ENCODE measurements at regions of chr19 and their contacts with region 1.

Region 1: GRCh38 chr19:32041681-32042292 is 303.6 kb upstream of the ZNF507 start:
- DNase-seq: no peak
- H3K4me3 ChIP-seq: peak overlapping the region; percentile 15 to 39 (median 27)
- H3K27ac ChIP-seq: no peak overlapping the region
- H3K4me1 ChIP-seq: peaks cover 0 to 52% (median 45%) of the 10 kb centered on the region in 4 donors
- H3K27me3 ChIP-seq: peaks cover 0 to 12% (median 0%) of the 10 kb centered on the region in 3 donors
- CTCF ChIP-seq: peak; percentile 63 to 80 (median 74)
- EP300 ChIP-seq: no peak
- POLR2A ChIP-seq: no peak

Region 2: DNA sequence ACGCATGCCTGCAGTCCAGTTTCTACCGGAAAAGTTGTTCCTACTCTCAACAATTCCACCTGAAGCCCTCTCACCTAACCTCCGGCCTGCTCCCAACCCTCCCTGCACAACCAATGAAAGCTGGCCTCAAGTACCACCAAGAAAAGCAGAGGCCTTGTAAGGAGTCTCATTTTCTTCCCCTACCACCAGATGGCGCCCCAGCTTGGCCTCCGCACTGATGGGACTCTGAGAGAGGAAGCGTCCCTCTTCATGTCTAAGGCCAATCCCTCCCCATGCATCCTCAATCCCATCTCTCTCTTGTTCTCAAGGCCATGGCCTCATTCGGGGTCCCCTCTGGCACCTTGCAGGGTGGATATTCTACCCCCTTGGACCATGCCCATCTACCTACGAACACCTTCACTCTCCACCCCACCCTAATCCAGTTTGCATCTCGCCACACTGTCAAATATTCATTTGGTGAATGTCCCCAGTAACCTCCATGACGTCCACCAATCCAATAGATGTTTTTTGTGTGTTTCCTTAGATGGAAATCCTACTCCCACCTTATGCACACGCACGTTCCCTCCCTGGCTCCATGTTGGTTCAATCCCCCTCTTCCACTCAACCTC is 1256.8 kb before region 1 on chr19:
- intact Hi-C with region 1: loop called (anchors 10 kb)
- DNase-seq: peak; percentile 76
- H3K4me3 ChIP-seq: no peak overlapping the region
- H3K27ac ChIP-seq: no peak overlapping the region
- H3K4me1 ChIP-seq: no peaks in the 10 kb centered on the region
- H3K27me3 ChIP-seq: no peaks in the 10 kb centered on the region
- CTCF ChIP-seq: peak; percentile 37 to 65 (median 58)
- EP300 ChIP-seq: no peak
- POLR2A ChIP-seq: no peak

Region 3: GRCh38 chr19:31338069-31338776 is 703.6 kb before region 1 on chr19:
- intact Hi-C with region 1: loop called (anchors 2 kb)
- DNase-seq: peak; percentile 92
- H3K4me3 ChIP-seq: peak overlapping the region in 3 of 4 donors; percentile 4 to 25 (median 21)
- H3K27ac ChIP-seq: peak overlapping the region; percentile 72 to 99 (median 82)
- H3K4me1 ChIP-seq: peaks cover 0 to 94% (median 77%) of the 10 kb centered on the region in 4 donors
- H3K27me3 ChIP-seq: no peaks in the 10 kb centered on the region
- CTCF ChIP-seq: peak in 3 of 4 experiments; percentile 66 to 72 (median 69)
- EP300 ChIP-seq: no peak
- POLR2A ChIP-seq: no peak

Region 4: GRCh38 chr19:31676271-31677004 is 365.3 kb before region 1 on chr19:
- intact Hi-C with region 1: loop called (anchors 5 kb)
- DNase-seq: no peak
- H3K4me3 ChIP-seq: no peak overlapping the region
- H3K27ac ChIP-seq: no peak overlapping the region
- H3K4me1 ChIP-seq: peaks cover 0 to 9% (median 4%) of the 10 kb centered on the region in 4 donors
- H3K27me3 ChIP-seq: no peaks in the 10 kb centered on the region
- CTCF ChIP-seq: peak in 1 of 4 experiments; percentile 23
- EP300 ChIP-seq: no peak
- POLR2A ChIP-seq: no peak

Region 5: GRCh38 chr19:32012886-32013631 is 28.7 kb before region 1 on chr19:
- intact Hi-C with region 1: no loop called
- DNase-seq: no peak
- H3K4me3 ChIP-seq: no peak overlapping the region
- H3K27ac ChIP-seq: peak overlapping the region in 1 of 4 donors; percentile 47
- H3K4me1 ChIP-seq: peaks cover 0 to 37% (median 26%) of the 10 kb centered on the region in 4 donors
- H3K27me3 ChIP-seq: no peaks in the 10 kb centered on the region
- CTCF ChIP-seq: no peak
- EP300 ChIP-seq: no peak
- POLR2A ChIP-seq: no peak

Region 6: GRCh38 chr19:32224371-32225244 is 182.8 kb after region 1 on chr19:
- intact Hi-C with region 1: loop called (anchors 5 kb)
- DNase-seq: no peak
- H3K4me3 ChIP-seq: peak overlapping the region in 3 of 4 donors; percentile 8 to 29 (median 23)
- H3K27ac ChIP-seq: no peak overlapping the region
- H3K4me1 ChIP-seq: peaks cover 0 to 7% (median 5%) of the 10 kb centered on the region in 4 donors
- H3K27me3 ChIP-seq: peaks cover 0 to 5% (median 0%) of the 10 kb centered on the region in 3 donors
- CTCF ChIP-seq: peak; percentile 78 to 100 (median 92)
- EP300 ChIP-seq: no peak
- POLR2A ChIP-seq: no peak